CD4-positive, alpha-beta T cell (primary cell): ENCODE measurements at regions of chr21 and their contacts with region 1.

Region 1: DNA sequence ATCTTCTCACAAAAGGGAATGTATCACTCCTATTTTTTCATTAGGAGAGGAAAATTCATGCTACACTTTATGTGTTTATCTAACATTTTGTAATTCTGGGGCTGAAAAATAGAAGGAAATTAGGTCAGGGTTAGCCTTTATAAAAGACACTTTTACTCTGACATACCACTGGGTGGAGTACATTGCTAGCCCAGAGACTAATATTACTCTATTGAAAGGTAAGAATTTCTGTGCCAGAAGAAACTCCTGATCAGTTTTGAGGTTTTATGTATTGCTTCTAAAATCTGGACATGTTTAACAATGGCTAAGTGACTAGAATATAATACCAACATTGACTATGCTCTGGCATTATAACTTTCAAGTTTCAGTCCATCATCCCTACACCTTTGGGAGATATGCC is 724.6 kb downstream of the USP25 start:
- DNase-seq: no peak
- ATAC-seq: no peak
- H3K4me3 ChIP-seq: no peak overlapping the region
- H3K4me3 Mint-ChIP-seq: no peak overlapping the region
- H3K27ac ChIP-seq: no peak overlapping the region
- H3K27ac Mint-ChIP-seq: no peak overlapping the region
- H3K4me1 ChIP-seq: no peaks in the 10 kb centered on the region
- H3K4me1 Mint-ChIP-seq: no peaks in the 10 kb centered on the region
- H3K27me3 ChIP-seq: no peaks in the 10 kb centered on the region
- H3K27me3 Mint-ChIP-seq: no peaks in the 10 kb centered on the region
- CTCF ChIP-seq: no peak

Region 2: DNA sequence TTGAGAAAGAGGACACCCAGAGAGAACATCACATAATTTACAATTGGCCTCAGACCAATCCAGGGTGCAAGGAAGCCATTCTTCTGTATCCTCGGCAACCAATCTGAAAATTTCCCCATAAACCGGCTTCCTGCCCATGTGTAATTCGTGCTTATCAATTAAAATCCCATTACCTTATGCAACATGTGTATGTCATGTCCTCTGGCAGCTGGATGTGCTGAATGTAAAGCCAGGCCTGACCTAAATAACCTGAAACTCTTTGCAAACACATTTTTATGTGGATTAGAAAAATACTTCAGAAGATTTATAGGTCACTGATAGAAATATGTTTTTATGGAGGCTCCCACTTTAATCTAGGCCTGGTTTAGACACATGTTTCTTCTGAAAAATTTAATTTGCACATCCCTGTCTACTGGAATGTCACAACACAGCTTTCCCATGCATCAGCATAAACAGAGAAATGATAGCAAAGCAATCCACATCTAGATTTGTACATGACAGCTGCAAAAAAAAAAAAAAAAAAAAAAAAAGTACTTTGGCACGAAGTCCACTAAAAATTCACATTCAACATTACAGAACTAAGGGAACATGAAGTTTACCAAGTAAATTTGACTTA is 1838.9 kb before region 1 on chr21:
- CTCF ChIA-PET with region 1: no interaction called
- POLR2A ChIA-PET with region 1: no interaction called
- intact Hi-C with region 1: no loop called
- DNase-seq: no peak
- ATAC-seq: no peak
- H3K4me3 ChIP-seq: no peak overlapping the region
- H3K4me3 Mint-ChIP-seq: no peak overlapping the region
- H3K27ac ChIP-seq: no peak overlapping the region
- H3K27ac Mint-ChIP-seq: no peak overlapping the region
- H3K4me1 ChIP-seq: no peaks in the 10 kb centered on the region
- H3K4me1 Mint-ChIP-seq: no peaks in the 10 kb centered on the region
- H3K27me3 ChIP-seq: no peaks in the 10 kb centered on the region
- H3K27me3 Mint-ChIP-seq: no peaks in the 10 kb centered on the region
- CTCF ChIP-seq: no peak

Region 3: DNA sequence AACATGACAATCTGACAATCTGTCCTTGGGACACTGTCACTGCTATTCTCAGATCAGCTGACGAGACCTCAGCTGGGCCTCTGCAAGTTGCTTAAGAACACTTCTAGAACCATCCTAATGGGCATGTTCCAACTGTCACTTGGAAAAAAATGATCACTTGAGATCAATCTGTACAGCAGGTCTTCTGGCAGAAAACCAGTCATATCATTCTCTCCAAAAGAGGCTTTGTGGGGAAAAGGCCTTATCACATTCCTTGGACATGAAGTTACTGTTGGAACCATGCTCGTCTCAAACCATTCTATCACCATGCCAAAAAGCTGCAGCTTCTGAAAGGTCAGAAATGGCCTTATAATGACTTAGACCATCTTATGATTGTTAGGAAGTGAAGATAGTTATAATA is 19.6 kb after region 1 on chr21:
- CTCF ChIA-PET with region 1: no interaction called
- POLR2A ChIA-PET with region 1: no interaction called
- intact Hi-C with region 1: loop called in 1 of 2 experiments (anchors 1 kb)
- DNase-seq: no peak
- ATAC-seq: no peak
- H3K4me3 ChIP-seq: no peak overlapping the region
- H3K4me3 Mint-ChIP-seq: no peak overlapping the region
- H3K27ac ChIP-seq: no peak overlapping the region
- H3K27ac Mint-ChIP-seq: no peak overlapping the region
- H3K4me1 ChIP-seq: no peaks in the 10 kb centered on the region
- H3K4me1 Mint-ChIP-seq: no peaks in the 10 kb centered on the region
- H3K27me3 ChIP-seq: no peaks in the 10 kb centered on the region
- H3K27me3 Mint-ChIP-seq: no peaks in the 10 kb centered on the region
- CTCF ChIP-seq: no peak

Region 4: GRCh38 chr21:16633831-16634459 is 179.5 kb after region 1 on chr21:
- CTCF ChIA-PET with region 1: no interaction called
- POLR2A ChIA-PET with region 1: no interaction called
- intact Hi-C with region 1: no loop called
- DNase-seq: no peak
- ATAC-seq: no peak
- H3K4me3 ChIP-seq: no peak overlapping the region
- H3K4me3 Mint-ChIP-seq: no peak overlapping the region
- H3K27ac ChIP-seq: no peak overlapping the region
- H3K27ac Mint-ChIP-seq: no peak overlapping the region
- H3K4me1 ChIP-seq: no peaks in the 10 kb centered on the region
- H3K4me1 Mint-ChIP-seq: no peaks in the 10 kb centered on the region
- H3K27me3 ChIP-seq: no peaks in the 10 kb centered on the region
- H3K27me3 Mint-ChIP-seq: no peaks in the 10 kb centered on the region
- CTCF ChIP-seq: no peak